H1 (cell line): ENCODE measurements at regions of chr16 and their contacts with region 1.

Region 1: DNA sequence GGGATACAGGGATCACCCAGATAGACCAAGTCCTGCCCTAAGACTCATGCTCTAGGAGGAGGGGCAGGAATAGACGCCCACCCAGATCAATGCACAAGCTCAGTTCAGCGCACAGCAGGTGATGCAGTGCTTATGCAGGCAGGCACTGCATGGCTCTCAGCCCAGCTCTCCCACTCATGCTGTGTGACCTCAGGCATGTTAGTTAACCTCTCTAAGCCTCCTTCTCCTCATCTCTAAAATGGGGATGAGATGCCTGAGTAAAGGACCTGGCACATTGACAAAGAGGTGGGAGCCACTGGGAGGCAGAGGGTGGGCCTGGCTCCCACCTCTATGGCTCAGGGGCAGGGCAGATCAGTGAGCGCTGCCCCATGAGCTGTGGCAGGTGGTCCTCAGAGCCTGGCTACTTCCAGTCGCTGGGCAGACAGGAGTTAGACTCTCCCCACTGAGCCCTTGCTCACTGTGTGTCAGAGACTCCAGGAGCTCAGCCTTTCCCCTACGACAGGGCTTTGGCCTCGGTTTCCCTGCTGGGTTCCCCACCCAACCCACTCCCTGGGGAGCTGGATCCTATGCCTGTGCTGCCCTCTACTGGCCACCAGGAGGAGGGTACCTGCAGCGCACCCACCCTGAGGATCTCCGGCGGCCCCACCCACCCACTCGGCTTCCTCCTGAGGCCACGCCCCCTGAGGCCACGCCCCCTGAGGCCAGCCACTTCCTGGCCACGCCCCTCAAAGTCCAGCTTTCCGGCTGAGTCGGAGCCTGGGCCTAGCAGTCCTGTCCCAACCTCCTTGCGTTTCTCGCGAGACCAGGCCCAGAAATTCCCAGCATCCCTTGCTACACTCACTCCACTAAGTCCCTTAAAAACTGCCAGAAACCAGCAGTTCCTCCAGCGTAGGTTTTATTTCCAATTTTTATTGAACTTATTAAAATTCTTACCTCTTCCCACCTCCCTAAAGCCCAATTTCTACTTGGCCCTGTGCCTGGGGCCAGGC is 196.1 kb downstream of the GSG1L start:
- DNase-seq: peak; percentile 70 to 99
- H3K4me3 ChIP-seq: no peak overlapping the region
- H3K27ac ChIP-seq: no peak overlapping the region
- H3K4me1 ChIP-seq: no peaks in the 10 kb centered on the region
- H3K27me3 ChIP-seq: peaks cover 0 to 3% (median 1%) of the 10 kb centered on the region in 4 experiments; a peak in 2 of 7 replicates
- CTCF ChIP-seq: peak; percentile 79 to 87 (median 81)
- EP300 ChIP-seq: no peak
- POLR2A ChIP-seq: no peak
- RAD21 ChIP-seq: peak; percentile 83

Region 2: DNA sequence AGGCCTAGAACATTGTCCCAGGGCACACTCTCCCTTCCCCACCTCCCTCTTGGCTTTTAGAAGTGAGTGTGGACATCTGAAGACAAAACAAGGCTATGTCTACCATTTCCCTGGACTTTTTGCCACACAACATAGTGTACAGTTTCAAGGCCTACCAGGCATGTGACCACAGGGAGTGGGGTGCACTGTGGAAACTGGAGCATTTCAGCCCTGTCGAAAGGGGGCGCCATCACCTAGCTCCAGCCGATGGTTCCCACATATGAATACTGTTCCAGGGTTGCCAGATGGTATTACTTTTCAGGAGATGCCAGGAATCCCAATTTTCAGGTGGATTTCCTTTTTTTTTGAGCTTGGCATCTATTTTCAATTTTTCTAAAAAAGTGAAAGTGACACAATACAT is 176.8 kb before region 1 on chr16:
- CTCF ChIA-PET with region 1: interaction called, 28 read pairs
- POLR2A ChIA-PET with region 1: no interaction called
- DNase-seq: peak in 1 of 2 experiments; percentile 77
- H3K4me3 ChIP-seq: no peak overlapping the region
- H3K27ac ChIP-seq: no peak overlapping the region
- H3K4me1 ChIP-seq: no peaks in the 10 kb centered on the region
- H3K27me3 ChIP-seq: no peaks in the 10 kb centered on the region
- CTCF ChIP-seq: peak; percentile 69 to 94 (median 94)
- EP300 ChIP-seq: no peak
- POLR2A ChIP-seq: no peak
- RAD21 ChIP-seq: peak; percentile 83

Region 3: GRCh38 chr16:27759301-27759871 is 108.0 kb before region 1 on chr16:
- CTCF ChIA-PET with region 1: interaction called, 12 read pairs
- POLR2A ChIA-PET with region 1: no interaction called
- DNase-seq: no peak
- H3K4me3 ChIP-seq: no peak overlapping the region
- H3K27ac ChIP-seq: no peak overlapping the region
- H3K4me1 ChIP-seq: peaks cover 0 to 3% (median 1%) of the 10 kb centered on the region in 4 experiments; a peak in 2 of 7 replicates
- H3K27me3 ChIP-seq: no peaks in the 10 kb centered on the region
- CTCF ChIP-seq: no peak
- EP300 ChIP-seq: no peak
- POLR2A ChIP-seq: no peak
- RAD21 ChIP-seq: no peak

Region 4: GRCh38 chr16:27801289-27801945 is 66.0 kb before region 1 on chr16:
- CTCF ChIA-PET with region 1: interaction called, 13 read pairs
- POLR2A ChIA-PET with region 1: no interaction called
- DNase-seq: no peak
- H3K4me3 ChIP-seq: no peak overlapping the region
- H3K27ac ChIP-seq: no peak overlapping the region
- H3K4me1 ChIP-seq: peaks cover 0 to 4% (median 1%) of the 10 kb centered on the region in 4 experiments; a peak in 5 of 7 replicates
- H3K27me3 ChIP-seq: no peaks in the 10 kb centered on the region; a peak in 1 of 7 replicates
- CTCF ChIP-seq: no peak
- EP300 ChIP-seq: no peak
- POLR2A ChIP-seq: no peak
- RAD21 ChIP-seq: no peak

Region 5: DNA sequence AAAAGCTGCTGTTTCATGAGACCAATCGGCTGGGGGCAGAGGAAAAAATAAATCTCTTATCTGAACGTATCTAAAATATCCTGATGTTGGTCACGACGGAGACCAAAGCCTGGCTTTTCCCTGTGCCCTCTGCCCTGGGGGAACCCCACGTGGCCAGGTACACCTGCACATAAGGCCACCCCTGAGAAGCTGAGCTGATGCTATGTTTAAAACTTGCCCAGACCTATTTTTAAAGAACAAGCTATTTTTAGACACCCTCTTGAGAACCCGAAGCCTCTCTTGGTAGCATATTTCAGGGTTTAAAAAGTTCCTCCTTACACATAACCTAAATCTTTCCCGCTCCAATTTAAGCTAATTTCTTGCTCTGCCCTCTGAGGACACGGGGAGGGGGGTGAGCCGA is 14.3 kb before region 1 on chr16:
- CTCF ChIA-PET with region 1: interaction called, 27 read pairs
- POLR2A ChIA-PET with region 1: no interaction called
- DNase-seq: no peak
- H3K4me3 ChIP-seq: no peak overlapping the region
- H3K27ac ChIP-seq: no peak overlapping the region
- H3K4me1 ChIP-seq: peaks cover 0 to 2% (median 0%) of the 10 kb centered on the region in 4 experiments; a peak in 3 of 7 replicates
- H3K27me3 ChIP-seq: no peaks in the 10 kb centered on the region
- CTCF ChIP-seq: no peak
- EP300 ChIP-seq: no peak
- POLR2A ChIP-seq: no peak
- RAD21 ChIP-seq: no peak

Region 6: DNA sequence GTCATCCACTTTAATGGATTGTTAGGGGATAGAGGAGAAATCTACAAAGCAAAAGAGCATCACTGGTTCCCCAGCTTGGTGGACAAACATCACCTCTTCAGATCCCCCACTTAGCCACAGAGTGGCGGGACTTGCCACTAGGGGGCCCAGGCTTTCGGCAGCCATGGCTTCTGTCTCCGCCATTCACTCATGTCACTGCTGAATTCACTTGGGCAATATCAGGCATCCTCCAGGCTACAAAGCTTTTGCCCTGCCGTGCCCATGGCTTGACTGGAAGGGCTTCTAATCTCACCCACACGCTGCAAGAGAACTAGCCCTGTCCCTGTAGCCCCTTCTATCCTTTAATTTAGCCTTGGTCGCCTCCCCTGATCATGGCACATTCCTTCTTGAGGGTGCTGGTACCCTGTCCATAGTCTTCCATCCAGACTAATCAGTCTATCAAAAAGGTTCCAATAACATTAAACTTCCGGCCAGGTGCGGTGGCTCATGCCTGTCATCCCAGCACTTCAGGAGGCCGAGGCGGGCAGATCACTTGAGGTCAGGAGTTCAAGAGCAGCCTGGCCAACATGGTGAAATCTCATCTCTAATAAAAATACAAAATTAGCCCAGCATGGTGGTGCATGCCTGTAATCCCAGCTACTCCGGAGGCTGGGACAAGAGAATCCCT is 459.7 kb after region 1 on chr16:
- CTCF ChIA-PET with region 1: no interaction called
- POLR2A ChIA-PET with region 1: no interaction called
- DNase-seq: peak in 1 of 2 experiments; percentile 88
- H3K4me3 ChIP-seq: no peak overlapping the region
- H3K27ac ChIP-seq: no peak overlapping the region
- H3K4me1 ChIP-seq: peaks cover 0 to 2% (median 0%) of the 10 kb centered on the region in 4 experiments; a peak in 2 of 7 replicates
- H3K27me3 ChIP-seq: no peaks in the 10 kb centered on the region
- CTCF ChIP-seq: peak; percentile 85 to 94 (median 89)
- EP300 ChIP-seq: no peak
- POLR2A ChIP-seq: no peak
- RAD21 ChIP-seq: peak; percentile 54 to 59